Breast epithelium (tissue), 4 donors: ENCODE measurements at regions of chr17 and their contacts with region 1.

Region 1: DNA sequence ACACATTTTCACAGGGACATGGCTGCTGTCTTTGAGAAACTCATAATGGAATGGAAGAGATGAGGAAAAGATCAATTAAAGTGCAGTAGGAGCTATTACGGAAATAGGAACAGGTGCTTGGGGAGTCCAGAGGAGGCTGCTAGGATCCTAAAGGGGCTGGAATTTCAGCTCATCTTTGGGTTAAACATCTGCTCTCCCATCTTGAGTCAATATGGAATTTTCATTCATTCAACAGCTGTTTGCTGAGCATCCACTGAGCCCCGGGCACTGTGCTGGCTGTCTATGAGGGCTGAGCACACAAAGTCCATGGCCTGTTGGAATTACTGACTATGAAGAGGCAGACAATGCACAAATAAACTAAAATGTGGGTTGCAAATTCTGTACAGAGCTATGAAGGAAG is 47.9 kb downstream of the ASIC2 start:
- DNase-seq: no peak
- H3K4me3 ChIP-seq: no peak overlapping the region
- H3K27ac ChIP-seq: no peak overlapping the region
- H3K4me1 ChIP-seq: no peaks in the 10 kb centered on the region
- H3K27me3 ChIP-seq: no peaks in the 10 kb centered on the region
- CTCF ChIP-seq: no peak
- POLR2A ChIP-seq: no peak

Region 2: DNA sequence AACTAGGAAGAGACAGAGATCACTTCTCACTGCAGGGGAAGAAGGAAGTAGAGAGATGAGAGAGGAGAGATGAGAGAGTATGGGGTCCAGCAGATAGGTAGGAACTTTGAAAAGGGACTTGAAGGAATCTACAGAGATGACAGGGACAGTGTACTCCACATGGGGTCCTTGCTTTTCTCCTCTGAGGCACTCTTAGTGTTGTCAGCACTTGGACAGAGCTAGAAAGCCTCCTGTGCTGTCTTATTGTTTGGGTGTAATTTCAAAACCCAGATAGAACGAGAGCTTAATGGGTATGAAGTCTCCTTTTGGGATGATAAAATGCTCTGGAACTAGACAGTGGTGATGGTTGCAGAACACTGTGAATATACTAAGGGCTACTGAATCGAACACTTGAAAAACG is 17.3 kb before region 1 on chr17:
- intact Hi-C with region 1: loop called (anchors 1 kb)
- DNase-seq: no peak
- H3K4me3 ChIP-seq: no peak overlapping the region
- H3K27ac ChIP-seq: no peak overlapping the region
- H3K4me1 ChIP-seq: no peaks in the 10 kb centered on the region
- H3K27me3 ChIP-seq: no peaks in the 10 kb centered on the region
- CTCF ChIP-seq: no peak
- POLR2A ChIP-seq: no peak